ENCODE measurements at regions of chr6 and their contacts with region 1.

Region 1: DNA sequence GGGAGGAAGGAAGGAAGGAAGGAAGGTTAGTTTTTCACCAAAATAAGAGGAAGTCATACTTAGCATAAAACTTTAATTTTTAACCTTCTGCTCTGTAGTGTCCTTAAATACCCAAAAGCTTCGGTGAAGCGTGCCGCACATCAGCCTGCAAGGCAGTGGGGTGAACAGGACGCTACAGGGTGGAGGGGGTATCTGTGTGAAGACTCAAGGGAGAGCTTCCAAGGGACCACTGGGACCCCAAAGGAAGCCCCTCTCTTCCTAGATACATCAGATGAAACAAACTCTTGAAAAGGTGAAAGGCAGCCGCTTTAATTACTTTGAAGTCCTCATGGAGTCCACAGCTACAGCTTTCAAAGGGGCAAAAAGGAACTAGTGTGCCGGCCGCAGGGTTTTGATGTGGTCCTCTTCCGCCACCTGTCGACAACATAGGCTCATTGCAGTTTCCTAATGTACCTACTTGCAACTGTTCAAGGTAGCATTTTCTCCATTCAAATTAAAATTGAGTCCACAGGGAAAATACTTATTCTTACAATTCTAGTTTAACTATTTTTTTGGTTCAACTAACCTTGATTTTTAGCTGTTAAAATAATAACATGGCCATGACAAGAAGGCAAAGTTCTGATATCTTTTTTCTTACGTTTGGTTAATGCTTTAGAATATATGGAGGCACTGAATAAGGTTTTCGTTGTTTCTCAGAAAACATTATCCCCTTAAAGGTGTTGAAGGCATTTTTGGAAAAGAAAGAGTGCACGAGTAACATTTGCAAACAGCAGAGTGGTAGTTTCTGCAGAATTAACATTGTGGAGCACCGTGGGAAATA is 135.0 kb upstream of the RIPOR2 start:
- H3K4me3 ChIP-seq: no peak overlapping the region
- H3K27ac ChIP-seq: no peak overlapping the region
- H3K4me1 ChIP-seq: no peaks in the 10 kb centered on the region
- CTCF ChIP-seq: peak; percentile 61

Region 2: GRCh38 chr6:25027221-25027916 is 43.4 kb before region 1 on chr6:
- CTCF ChIA-PET with region 1: interaction called, 24 read pairs
- POLR2A ChIA-PET with region 1: no interaction called
- H3K4me3 ChIP-seq: no peak overlapping the region
- H3K27ac ChIP-seq: no peak overlapping the region
- H3K4me1 ChIP-seq: no peaks in the 10 kb centered on the region
- CTCF ChIP-seq: no peak

Region 3: GRCh38 chr6:25088513-25088912 is 17.8 kb after region 1 on chr6:
- CTCF ChIA-PET with region 1: interaction called, 12 read pairs
- POLR2A ChIA-PET with region 1: no interaction called
- H3K4me3 ChIP-seq: no peak overlapping the region
- H3K27ac ChIP-seq: no peak overlapping the region
- H3K4me1 ChIP-seq: no peaks in the 10 kb centered on the region
- CTCF ChIP-seq: no peak

Measured in HEK293 (cell line).